ENCODE measurements at regions of chr12 and their contacts with region 1.

Region 1: DNA sequence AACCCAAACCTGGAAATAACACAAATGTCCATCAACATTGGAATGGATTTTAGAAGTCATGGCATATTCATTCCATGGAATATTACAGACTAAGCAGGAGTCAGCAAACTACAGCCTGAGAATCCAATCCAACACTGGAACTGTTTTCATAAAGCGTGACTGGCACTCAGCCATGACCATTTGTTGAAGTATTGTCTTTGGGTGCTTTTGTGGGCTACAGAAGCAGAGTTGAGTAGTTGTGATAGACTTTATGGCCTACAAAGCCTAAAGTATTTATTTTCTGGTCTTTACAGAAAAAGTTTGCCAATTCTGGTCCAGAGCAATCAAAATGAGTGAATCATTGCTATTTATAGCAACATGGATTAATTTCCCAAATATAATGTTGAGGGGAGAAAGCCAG is 34.5 kb upstream of the FRS2 start:
- DNase-seq: no peak
- H3K4me3 ChIP-seq: no peak overlapping the region
- H3K27ac ChIP-seq: no peak overlapping the region
- H3K4me1 ChIP-seq: no peaks in the 10 kb centered on the region
- H3K27me3 ChIP-seq: no peaks in the 10 kb centered on the region
- CTCF ChIP-seq: no peak

Region 2: DNA sequence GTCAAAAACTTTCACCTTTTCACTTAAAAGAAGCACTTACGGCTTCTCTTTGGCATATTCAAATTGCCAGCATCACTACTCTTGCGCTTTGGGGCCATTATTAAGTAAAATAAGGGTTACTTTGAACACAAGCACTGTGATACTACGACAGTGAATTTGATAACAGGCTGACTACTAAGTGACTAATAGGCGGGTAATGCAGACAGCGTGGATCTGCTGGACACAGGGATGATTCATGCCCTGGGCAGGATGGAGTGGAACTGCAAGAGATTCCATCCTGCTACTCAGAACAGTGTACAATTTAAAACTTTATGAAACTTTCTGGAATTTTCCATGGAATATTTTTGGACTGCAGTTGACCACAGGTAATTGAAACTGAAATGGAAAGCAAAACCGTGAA is 30.2 kb before region 1 on chr12:
- CTCF ChIA-PET with region 1: no interaction called
- dilution Hi-C with region 1: no loop called
- in situ Hi-C with region 1: no loop called
- intact Hi-C with region 1: loop called (anchors 1 kb)
- DNase-seq: peak; percentile 86
- H3K4me3 ChIP-seq: no peak overlapping the region
- H3K27ac ChIP-seq: no peak overlapping the region
- H3K4me1 ChIP-seq: peaks cover 12% of the 10 kb centered on the region
- H3K27me3 ChIP-seq: no peaks in the 10 kb centered on the region
- CTCF ChIP-seq: no peak

Region 3: DNA sequence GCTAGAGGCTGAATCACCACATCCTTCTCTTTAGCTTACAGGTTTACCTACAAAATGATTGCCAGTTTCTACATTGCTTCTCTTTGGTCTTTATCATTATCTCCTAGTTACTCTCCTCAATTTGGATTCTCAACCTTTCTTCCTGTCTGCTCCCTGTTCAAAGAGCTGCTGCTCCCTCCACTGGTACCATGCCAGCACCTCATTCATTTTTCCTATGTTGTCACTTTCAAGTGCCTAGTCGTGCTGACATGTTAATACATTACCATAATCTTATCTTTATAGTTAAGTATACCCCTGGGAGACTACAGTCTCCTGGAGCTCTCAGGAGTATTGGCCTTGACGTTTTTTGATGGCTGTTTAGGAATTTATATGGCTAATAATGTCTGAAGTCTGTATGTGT is 48.8 kb after region 1 on chr12:
- CTCF ChIA-PET with region 1: no interaction called
- dilution Hi-C with region 1: no loop called
- in situ Hi-C with region 1: no loop called
- intact Hi-C with region 1: no loop called
- DNase-seq: no peak
- H3K4me3 ChIP-seq: no peak overlapping the region
- H3K27ac ChIP-seq: no peak overlapping the region
- H3K4me1 ChIP-seq: no peaks in the 10 kb centered on the region
- H3K27me3 ChIP-seq: no peaks in the 10 kb centered on the region
- CTCF ChIP-seq: peak in 1 of 2 donors; percentile 16

Region 4: DNA sequence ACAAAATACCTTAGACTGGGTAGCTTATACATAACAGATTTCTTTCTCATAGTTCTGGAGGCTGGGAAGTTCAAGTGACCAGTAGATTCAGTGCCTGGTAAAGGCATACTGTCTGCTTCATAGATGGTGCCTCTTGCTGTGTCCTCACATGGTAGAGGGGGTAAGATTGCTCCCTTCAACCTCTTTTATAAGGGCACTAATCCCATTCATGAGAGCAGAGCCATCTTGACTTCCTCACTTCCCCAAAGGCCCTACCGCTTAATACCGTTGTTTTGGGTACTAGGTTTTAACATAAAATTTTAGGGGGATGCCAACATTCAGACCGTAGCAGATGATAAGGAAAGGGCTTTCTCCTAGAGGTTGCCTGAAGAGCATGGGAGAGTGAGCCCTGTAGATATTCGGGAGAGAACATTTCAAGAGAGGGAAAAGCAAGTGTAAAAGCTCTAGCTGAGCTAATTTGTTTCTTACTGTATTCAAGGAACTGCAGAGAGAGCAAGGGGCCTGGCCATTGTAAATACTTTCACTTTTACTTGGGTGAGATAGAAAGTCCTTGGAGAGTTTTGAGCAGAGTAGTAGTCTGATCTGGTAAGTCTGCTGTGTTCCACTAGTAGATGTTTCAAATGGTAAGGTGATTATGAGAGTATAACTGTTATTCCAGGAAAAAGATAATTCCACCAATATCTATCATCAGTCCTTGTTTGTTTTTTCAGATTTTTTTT is 61.8 kb after region 1 on chr12:
- CTCF ChIA-PET with region 1: no interaction called
- dilution Hi-C with region 1: no loop called
- in situ Hi-C with region 1: no loop called
- intact Hi-C with region 1: no loop called
- DNase-seq: no peak
- H3K4me3 ChIP-seq: no peak overlapping the region
- H3K27ac ChIP-seq: no peak overlapping the region
- H3K4me1 ChIP-seq: peaks cover 32% of the 10 kb centered on the region
- H3K27me3 ChIP-seq: no peaks in the 10 kb centered on the region
- CTCF ChIP-seq: no peak

Measured in mammary epithelial cell (primary cell).